ENCODE measurements at regions of chr6 and their contacts with region 1.

Region 1: DNA sequence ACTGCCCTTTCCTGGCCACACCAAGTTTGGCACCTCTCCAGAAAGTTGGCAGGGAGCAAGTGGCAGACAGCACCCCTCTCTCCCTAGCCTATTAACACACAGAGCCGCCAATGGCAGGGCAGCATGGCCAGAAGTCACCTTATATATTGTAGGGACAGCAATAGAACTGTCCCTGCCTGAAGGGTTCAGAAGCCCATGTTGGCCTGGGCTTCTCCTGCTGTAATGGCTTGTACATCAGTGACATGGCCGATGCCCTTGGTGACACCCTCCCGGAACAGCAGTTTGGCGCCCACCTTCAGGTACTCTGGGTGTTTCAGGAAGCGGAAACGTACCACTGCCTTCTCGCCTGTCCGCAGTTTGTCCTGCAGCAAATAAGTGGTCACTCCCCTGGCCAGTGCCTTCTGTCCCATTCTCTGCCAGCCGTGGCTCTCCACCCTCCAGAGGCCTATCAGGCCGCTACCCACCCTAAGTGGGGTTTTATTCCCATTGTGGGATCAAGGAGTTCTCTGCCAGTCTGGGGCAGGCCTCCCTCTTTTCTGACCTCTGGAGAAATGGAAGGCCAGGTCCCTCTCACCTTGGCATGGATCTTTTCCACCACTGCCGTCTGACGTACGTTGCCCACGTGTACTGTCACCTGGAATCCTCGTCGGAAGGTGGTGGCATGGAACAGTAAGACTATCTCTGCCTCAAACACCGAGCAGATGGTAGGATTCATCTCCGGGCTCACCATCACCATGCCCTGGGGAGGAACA is 7.5 kb downstream of the GTPBP2 start:
- DNase-seq: no peak
- H3K4me3 Mint-ChIP-seq: no peak overlapping the region
- H3K27ac Mint-ChIP-seq: peak overlapping the region; percentile 8
- H3K4me1 Mint-ChIP-seq: peaks cover 10% of the 10 kb centered on the region
- H3K27me3 Mint-ChIP-seq: no peaks in the 10 kb centered on the region

Region 2: DNA sequence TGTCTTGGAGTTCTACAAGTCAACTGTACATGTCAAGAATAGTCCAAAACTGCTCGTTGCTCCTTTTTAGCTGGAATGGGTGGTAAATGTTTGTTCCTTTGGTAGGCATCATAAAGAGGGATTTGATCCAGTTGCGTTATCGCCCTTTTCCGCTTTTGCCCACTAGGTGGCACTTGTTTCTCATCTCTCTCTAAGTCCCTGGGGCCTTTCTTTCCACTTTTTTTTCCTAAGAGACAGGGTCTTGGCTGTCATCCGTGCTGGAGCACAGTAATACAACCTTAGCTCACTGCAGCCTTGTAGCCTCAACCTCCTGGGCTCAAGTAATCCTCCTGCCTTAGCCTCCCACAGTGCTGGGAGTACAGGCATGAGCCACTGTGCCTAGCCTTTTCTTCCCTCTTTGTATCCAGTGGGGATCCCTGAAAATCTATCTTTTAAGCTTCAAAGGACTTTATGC is 13.3 kb before region 1 on chr6:
- CTCF ChIA-PET with region 1: interaction called, 14 read pairs
- POLR2A ChIA-PET with region 1: interaction called, 6 read pairs
- DNase-seq: peak; percentile 65
- H3K4me3 Mint-ChIP-seq: no peak overlapping the region
- H3K27ac Mint-ChIP-seq: peak overlapping the region; percentile 16
- H3K4me1 Mint-ChIP-seq: peaks cover 6% of the 10 kb centered on the region
- H3K27me3 Mint-ChIP-seq: no peaks in the 10 kb centered on the region

Region 3: DNA sequence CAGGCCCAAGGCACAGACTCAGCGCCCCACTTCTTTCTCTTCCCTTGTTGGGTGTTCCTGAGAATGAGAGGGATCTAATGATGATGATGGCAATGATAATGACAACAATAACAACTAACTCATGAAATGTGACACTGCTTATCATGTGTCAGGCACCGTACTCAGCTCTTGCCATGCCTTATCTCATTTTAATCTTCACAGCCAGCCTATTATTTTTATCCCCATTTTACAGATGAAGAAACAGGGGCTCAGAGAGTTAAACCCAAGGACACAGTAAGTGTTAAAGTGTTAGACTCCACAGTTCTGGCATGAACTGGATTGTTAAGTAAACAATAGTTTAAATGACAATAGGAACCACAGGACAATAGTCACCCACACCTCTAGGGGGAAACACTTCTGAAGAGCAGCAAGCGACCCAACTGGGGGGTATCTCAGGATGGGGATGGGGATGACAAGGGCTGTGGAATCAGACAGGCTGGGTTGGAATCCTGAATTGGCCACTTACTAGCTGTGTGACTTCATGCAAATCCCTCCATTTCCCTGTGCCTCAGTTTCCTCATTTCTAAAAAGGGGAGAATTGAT is 35.7 kb after region 1 on chr6:
- CTCF ChIA-PET with region 1: no interaction called
- POLR2A ChIA-PET with region 1: no interaction called
- DNase-seq: no peak
- H3K4me3 Mint-ChIP-seq: no peak overlapping the region
- H3K27ac Mint-ChIP-seq: no peak overlapping the region
- H3K4me1 Mint-ChIP-seq: peaks cover 7% of the 10 kb centered on the region
- H3K27me3 Mint-ChIP-seq: peaks cover 9% of the 10 kb centered on the region